T-cell (primary cell): ENCODE measurements at regions of chr3 and their contacts with region 1.

Region 1: DNA sequence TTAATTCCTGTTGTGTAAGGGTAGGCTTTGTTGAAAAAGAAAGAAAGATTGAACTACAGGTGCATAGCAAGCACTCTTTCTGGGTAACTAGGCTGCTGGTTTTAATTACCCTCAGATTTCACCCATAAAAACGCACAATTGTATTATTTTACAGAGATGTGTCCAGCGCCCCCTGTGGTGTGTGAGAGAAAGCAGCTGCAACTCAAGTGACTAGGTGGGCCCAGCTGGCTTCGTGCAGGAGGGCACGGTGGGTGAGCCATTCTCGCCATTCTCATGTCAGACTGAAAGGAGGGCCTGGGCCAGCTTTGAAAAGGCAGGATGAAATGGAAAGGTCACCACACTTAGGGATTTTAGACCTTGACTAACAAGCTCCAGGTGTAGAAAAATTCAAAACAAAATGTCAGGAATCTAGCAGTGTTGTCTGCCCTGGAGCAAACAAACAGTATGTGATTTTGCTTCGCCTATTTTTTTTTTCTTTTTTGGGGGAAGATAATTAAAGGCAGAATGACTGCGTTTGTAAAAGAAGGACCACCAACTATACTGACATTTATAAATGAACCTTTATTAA is 122.5 kb downstream of the LRIG1 start:
- DNase-seq: peak in 31 of 35 experiments; percentile 18 to 70 (median 41)
- ATAC-seq: peak; percentile 27 to 69 (median 42)
- H3K4me3 ChIP-seq: no peak overlapping the region
- H3K4me3 Mint-ChIP-seq: peak overlapping the region in 1 of 3 donors; percentile 2
- H3K27ac ChIP-seq: peak overlapping the region; percentile 73
- H3K27ac Mint-ChIP-seq: peak overlapping the region; percentile 91 to 94
- H3K4me1 ChIP-seq: peaks cover 0 to 14% of the 10 kb centered on the region in 2 experiments
- H3K4me1 Mint-ChIP-seq: peaks cover 11 to 27% (median 22%) of the 10 kb centered on the region in 3 donors
- H3K27me3 ChIP-seq: no peaks in the 10 kb centered on the region
- H3K27me3 Mint-ChIP-seq: no peaks in the 10 kb centered on the region

Region 2: GRCh38 chr3:66270701-66271100 is 107.6 kb before region 1 on chr3:
- CTCF ChIA-PET with region 1: interaction called, 5 to 10 read pairs
- POLR2A ChIA-PET with region 1: no interaction called
- DNase-seq: no peak
- ATAC-seq: no peak
- H3K4me3 ChIP-seq: no peak overlapping the region
- H3K4me3 Mint-ChIP-seq: no peak overlapping the region
- H3K27ac ChIP-seq: no peak overlapping the region
- H3K27ac Mint-ChIP-seq: no peak overlapping the region
- H3K4me1 ChIP-seq: no peaks in the 10 kb centered on the region
- H3K4me1 Mint-ChIP-seq: peaks cover 0 to 19% (median 3%) of the 10 kb centered on the region in 3 donors
- H3K27me3 ChIP-seq: no peaks in the 10 kb centered on the region
- H3K27me3 Mint-ChIP-seq: no peaks in the 10 kb centered on the region

Region 3: GRCh38 chr3:66276705-66277274 is 101.5 kb before region 1 on chr3:
- CTCF ChIA-PET with region 1: interaction called, 13 to 29 read pairs
- POLR2A ChIA-PET with region 1: no interaction called
- DNase-seq: peak in 34 of 35 experiments; percentile 11 to 84 (median 54)
- ATAC-seq: peak in 3 of 4 experiments; percentile 40 to 61 (median 54)
- H3K4me3 ChIP-seq: no peak overlapping the region
- H3K4me3 Mint-ChIP-seq: no peak overlapping the region
- H3K27ac ChIP-seq: no peak overlapping the region
- H3K27ac Mint-ChIP-seq: peak overlapping the region; percentile 49 to 74
- H3K4me1 ChIP-seq: peaks cover 3 to 9% of the 10 kb centered on the region in 2 experiments
- H3K4me1 Mint-ChIP-seq: peaks cover 35 to 43% (median 40%) of the 10 kb centered on the region in 3 donors
- H3K27me3 ChIP-seq: no peaks in the 10 kb centered on the region
- H3K27me3 Mint-ChIP-seq: no peaks in the 10 kb centered on the region

Region 4: GRCh38 chr3:66302288-66302687 is 76.1 kb before region 1 on chr3:
- CTCF ChIA-PET with region 1: interaction called, 7 to 11 read pairs
- POLR2A ChIA-PET with region 1: interaction called in 1 of 2 experiments, 6 read pairs
- DNase-seq: peak in 31 of 35 experiments; percentile 15 to 82 (median 56)
- ATAC-seq: peak; percentile 78 to 89 (median 87)
- H3K4me3 ChIP-seq: no peak overlapping the region
- H3K4me3 Mint-ChIP-seq: peak overlapping the region in 2 of 3 donors; percentile 4 to 45
- H3K27ac ChIP-seq: peak overlapping the region; percentile 99
- H3K27ac Mint-ChIP-seq: peak overlapping the region in 1 of 2 donors; percentile 97
- H3K4me1 ChIP-seq: peaks cover 19 to 51% of the 10 kb centered on the region in 2 experiments
- H3K4me1 Mint-ChIP-seq: peaks cover 69 to 78% (median 72%) of the 10 kb centered on the region in 3 donors
- H3K27me3 ChIP-seq: no peaks in the 10 kb centered on the region
- H3K27me3 Mint-ChIP-seq: no peaks in the 10 kb centered on the region

Region 5: DNA sequence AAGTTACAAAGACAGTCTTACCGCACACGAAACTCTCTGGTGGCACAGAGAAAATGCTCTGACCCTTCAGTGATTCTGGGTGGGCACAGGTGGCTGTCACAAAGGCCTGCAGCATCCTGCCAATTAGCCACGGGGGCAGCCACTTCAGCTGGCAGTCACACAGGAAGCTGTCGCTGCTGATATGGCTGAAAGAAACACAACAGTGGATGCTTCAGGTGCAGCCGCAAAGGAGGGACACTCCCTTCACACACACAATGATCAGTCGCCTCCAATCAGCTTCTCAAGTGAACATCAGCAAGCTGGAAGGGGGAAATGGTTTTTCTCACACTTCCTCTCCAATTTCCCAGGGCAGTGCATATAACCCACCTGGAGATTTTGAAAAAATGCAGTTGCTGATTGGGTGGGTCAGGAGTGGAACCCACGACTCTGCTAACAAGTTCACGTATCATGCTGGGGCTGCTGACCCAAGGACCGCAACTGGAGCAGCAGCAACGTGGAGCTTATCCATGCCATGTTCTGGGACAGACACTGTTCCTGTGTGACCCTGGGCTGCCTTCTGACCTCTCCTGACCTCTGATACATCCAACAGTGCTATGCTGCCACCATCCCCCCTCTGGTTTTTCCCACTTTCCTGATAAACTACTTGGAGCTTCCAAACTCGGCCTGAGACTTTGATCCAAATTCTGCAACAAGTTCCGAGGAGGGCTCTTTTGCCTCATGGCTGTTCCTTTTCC is 15.8 kb after region 1 on chr3:
- CTCF ChIA-PET with region 1: interaction called, 3 to 17 read pairs
- POLR2A ChIA-PET with region 1: no interaction called
- DNase-seq: peak; percentile 45 to 78 (median 62)
- ATAC-seq: peak; percentile 96 to 98 (median 97)
- H3K4me3 ChIP-seq: peak overlapping the region; percentile 26 to 35
- H3K4me3 Mint-ChIP-seq: peak overlapping the region; percentile 84 to 85 (median 84)
- H3K27ac ChIP-seq: peak overlapping the region; percentile 55
- H3K27ac Mint-ChIP-seq: peak overlapping the region; percentile 96 to 99
- H3K4me1 ChIP-seq: peaks cover 7 to 30% of the 10 kb centered on the region in 2 experiments
- H3K4me1 Mint-ChIP-seq: peaks cover 59 to 60% (median 59%) of the 10 kb centered on the region in 3 donors
- H3K27me3 ChIP-seq: no peaks in the 10 kb centered on the region
- H3K27me3 Mint-ChIP-seq: no peaks in the 10 kb centered on the region